Activated CD4-positive, alpha-beta T cell treated with anti-CD3 and anti-CD28 coated beads, Interleukin-2, amount 10 ng/mL, durations not matched to agents 24 days and 14 days (primary cell): ENCODE measurements at regions of chr10 and their contacts with region 1.

Region 1: GRCh38 chr10:23067939-23068775 is 27.2 kb upstream of the MSRB2 start:
- DNase-seq: peak; percentile 85
- H3K4me3 Mint-ChIP-seq: no peak overlapping the region
- H3K27ac Mint-ChIP-seq: no peak overlapping the region
- H3K4me1 Mint-ChIP-seq: peaks cover 2% of the 10 kb centered on the region
- H3K27me3 Mint-ChIP-seq: no peaks in the 10 kb centered on the region

Region 2: DNA sequence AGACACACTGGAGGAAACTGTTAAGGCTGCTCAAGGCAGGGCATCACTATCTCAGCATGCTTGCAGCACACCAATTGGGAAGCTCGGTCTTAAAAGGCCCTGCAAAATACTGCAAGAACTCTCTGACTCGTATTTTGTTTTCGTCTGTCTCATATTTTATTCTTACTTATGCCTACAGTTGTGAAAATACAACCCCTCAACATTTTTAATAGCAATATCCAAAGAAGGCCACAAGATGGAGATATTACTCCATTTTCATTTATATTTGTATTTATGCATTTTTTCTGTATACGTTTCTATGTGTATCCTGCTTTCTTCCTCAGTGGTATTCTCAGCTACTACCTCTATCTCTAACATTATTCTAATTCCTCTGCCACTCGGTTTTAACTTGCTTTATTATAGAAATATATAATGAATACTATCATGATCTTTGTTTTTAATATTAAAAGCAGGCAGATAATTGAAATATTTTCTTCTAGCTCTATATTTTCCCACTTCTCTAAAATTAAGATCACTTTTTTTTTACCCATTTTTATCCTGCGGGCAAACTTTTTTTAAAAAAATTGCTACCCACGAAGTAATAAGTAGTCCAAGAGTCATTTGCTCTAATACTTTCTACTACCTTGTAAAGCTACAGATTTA is 1074.7 kb before region 1 on chr10:
- intact Hi-C with region 1: loop called (anchors 1 kb)
- DNase-seq: no peak
- H3K4me3 Mint-ChIP-seq: no peak overlapping the region
- H3K27ac Mint-ChIP-seq: no peak overlapping the region
- H3K4me1 Mint-ChIP-seq: peaks cover 10% of the 10 kb centered on the region
- H3K27me3 Mint-ChIP-seq: no peaks in the 10 kb centered on the region